ENCODE measurements at regions of chr1 and their contacts with region 1.

Region 1: GRCh38 chr1:62175568-62176179 is 19.0 kb upstream of the L1TD1 start:
- DNase-seq: peak in 25 of 35 experiments; percentile 5 to 69 (median 19)
- ATAC-seq: no peak
- H3K4me3 ChIP-seq: no peak overlapping the region
- H3K4me3 Mint-ChIP-seq: no peak overlapping the region
- H3K27ac ChIP-seq: no peak overlapping the region
- H3K27ac Mint-ChIP-seq: no peak overlapping the region
- H3K4me1 ChIP-seq: no peaks in the 10 kb centered on the region
- H3K4me1 Mint-ChIP-seq: no peaks in the 10 kb centered on the region
- H3K27me3 ChIP-seq: peaks cover 0 to 11% of the 10 kb centered on the region in 2 experiments
- H3K27me3 Mint-ChIP-seq: peaks cover 0 to 7% of the 10 kb centered on the region in 2 donors

Region 2: GRCh38 chr1:61869691-61870109 is 306.0 kb before region 1 on chr1:
- CTCF ChIA-PET with region 1: no interaction called
- POLR2A ChIA-PET with region 1: no interaction called
- DNase-seq: no peak
- ATAC-seq: no peak
- H3K4me3 ChIP-seq: no peak overlapping the region
- H3K4me3 Mint-ChIP-seq: no peak overlapping the region
- H3K27ac ChIP-seq: no peak overlapping the region
- H3K27ac Mint-ChIP-seq: no peak overlapping the region
- H3K4me1 ChIP-seq: no peaks in the 10 kb centered on the region
- H3K4me1 Mint-ChIP-seq: no peaks in the 10 kb centered on the region
- H3K27me3 ChIP-seq: no peaks in the 10 kb centered on the region
- H3K27me3 Mint-ChIP-seq: no peaks in the 10 kb centered on the region

Region 3: DNA sequence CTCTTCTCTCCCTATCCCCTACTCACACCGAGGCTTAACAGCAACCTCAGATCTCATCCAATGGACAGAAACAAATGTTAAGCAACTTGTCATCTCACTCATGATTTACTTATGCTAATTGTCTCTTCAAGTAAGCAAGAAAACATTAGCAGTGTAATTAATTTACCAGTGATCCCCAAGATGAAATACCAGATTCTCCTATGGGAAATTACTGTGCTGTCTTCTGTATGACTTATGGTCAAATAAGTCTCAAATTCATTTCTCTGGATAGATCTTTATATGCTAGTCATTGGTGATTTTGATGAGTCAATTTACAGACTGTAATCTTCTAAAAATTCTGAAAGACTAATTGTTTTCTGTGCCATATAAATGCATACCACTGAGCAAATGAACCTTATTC is 14.0 kb before region 1 on chr1:
- CTCF ChIA-PET with region 1: no interaction called
- POLR2A ChIA-PET with region 1: no interaction called
- DNase-seq: no peak
- ATAC-seq: no peak
- H3K4me3 ChIP-seq: no peak overlapping the region
- H3K4me3 Mint-ChIP-seq: no peak overlapping the region
- H3K27ac ChIP-seq: no peak overlapping the region
- H3K27ac Mint-ChIP-seq: no peak overlapping the region
- H3K4me1 ChIP-seq: no peaks in the 10 kb centered on the region
- H3K4me1 Mint-ChIP-seq: no peaks in the 10 kb centered on the region
- H3K27me3 ChIP-seq: no peaks in the 10 kb centered on the region
- H3K27me3 Mint-ChIP-seq: no peaks in the 10 kb centered on the region

Region 4: GRCh38 chr1:62407405-62408009 is 231.8 kb after region 1 on chr1:
- CTCF ChIA-PET with region 1: interaction called, 10 to 13 read pairs
- POLR2A ChIA-PET with region 1: no interaction called
- DNase-seq: peak in 6 of 35 experiments; percentile 3 to 73 (median 16)
- ATAC-seq: peak in 1 of 4 experiments; percentile 42
- H3K4me3 ChIP-seq: no peak overlapping the region
- H3K4me3 Mint-ChIP-seq: no peak overlapping the region
- H3K27ac ChIP-seq: no peak overlapping the region
- H3K27ac Mint-ChIP-seq: no peak overlapping the region
- H3K4me1 ChIP-seq: no peaks in the 10 kb centered on the region
- H3K4me1 Mint-ChIP-seq: no peaks in the 10 kb centered on the region
- H3K27me3 ChIP-seq: peaks cover 0 to 9% of the 10 kb centered on the region in 2 experiments
- H3K27me3 Mint-ChIP-seq: no peaks in the 10 kb centered on the region

Region 5: GRCh38 chr1:62746085-62746808 is 570.6 kb after region 1 on chr1:
- CTCF ChIA-PET with region 1: interaction called, 8 to 16 read pairs
- POLR2A ChIA-PET with region 1: no interaction called
- DNase-seq: peak in 1 of 35 experiments; percentile 60
- ATAC-seq: no peak
- H3K4me3 ChIP-seq: no peak overlapping the region
- H3K4me3 Mint-ChIP-seq: no peak overlapping the region
- H3K27ac ChIP-seq: no peak overlapping the region
- H3K27ac Mint-ChIP-seq: no peak overlapping the region
- H3K4me1 ChIP-seq: no peaks in the 10 kb centered on the region
- H3K4me1 Mint-ChIP-seq: peaks cover 0 to 1% (median 0%) of the 10 kb centered on the region in 3 donors
- H3K27me3 ChIP-seq: no peaks in the 10 kb centered on the region
- H3K27me3 Mint-ChIP-seq: peaks cover 0 to 8% of the 10 kb centered on the region in 2 donors

Measured in T-cell (primary cell).